Upper lobe of right lung (tissue), 1 donor: ENCODE measurements at regions of chr3 and their contacts with region 1.

Region 1: GRCh38 chr3:160003520-160004128 is 15.0 kb downstream of the IL12A start:
- DNase-seq: peak; percentile 77
- ATAC-seq: peak; percentile 95
- H3K4me3 ChIP-seq: no peak overlapping the region
- H3K27ac ChIP-seq: no peak overlapping the region
- H3K4me1 ChIP-seq: no peaks in the 10 kb centered on the region
- H3K27me3 ChIP-seq: no peaks in the 10 kb centered on the region
- CTCF ChIP-seq: peak; percentile 62

Region 2: DNA sequence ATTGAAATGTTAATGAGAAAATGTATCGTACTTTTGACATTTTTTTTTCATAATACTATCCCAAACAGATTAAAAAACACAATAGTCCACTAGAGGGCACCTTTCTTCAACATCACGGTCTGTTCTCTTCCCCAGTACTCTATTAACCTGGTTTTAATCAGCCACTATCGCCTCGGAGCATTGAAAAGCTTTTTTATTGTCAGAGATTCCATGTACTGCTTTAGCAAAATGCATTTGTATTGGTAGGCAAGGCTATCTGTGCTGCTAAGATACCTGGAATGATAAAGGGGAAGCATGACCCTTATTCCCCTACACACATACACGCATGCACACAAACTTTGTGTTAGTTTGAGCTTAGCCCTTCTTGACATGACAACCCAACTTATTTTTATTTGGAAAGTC is 175.1 kb before region 1 on chr3:
- intact Hi-C with region 1: loop called (anchors 5 kb)
- DNase-seq: no peak
- ATAC-seq: peak; percentile 82
- H3K4me3 ChIP-seq: no peak overlapping the region
- H3K27ac ChIP-seq: no peak overlapping the region
- H3K4me1 ChIP-seq: peaks cover 14% of the 10 kb centered on the region
- H3K27me3 ChIP-seq: no peaks in the 10 kb centered on the region
- CTCF ChIP-seq: peak; percentile 56

Region 3: GRCh38 chr3:159884661-159885402 is 118.8 kb before region 1 on chr3:
- intact Hi-C with region 1: loop called (anchors 5 kb)
- DNase-seq: no peak
- ATAC-seq: peak; percentile 57
- H3K4me3 ChIP-seq: no peak overlapping the region
- H3K27ac ChIP-seq: no peak overlapping the region
- H3K4me1 ChIP-seq: peaks cover 30% of the 10 kb centered on the region
- H3K27me3 ChIP-seq: no peaks in the 10 kb centered on the region
- CTCF ChIP-seq: peak; percentile 57